Panc1 (cell line): ENCODE measurements at regions of chr1 and their contacts with region 1.

Region 1: DNA sequence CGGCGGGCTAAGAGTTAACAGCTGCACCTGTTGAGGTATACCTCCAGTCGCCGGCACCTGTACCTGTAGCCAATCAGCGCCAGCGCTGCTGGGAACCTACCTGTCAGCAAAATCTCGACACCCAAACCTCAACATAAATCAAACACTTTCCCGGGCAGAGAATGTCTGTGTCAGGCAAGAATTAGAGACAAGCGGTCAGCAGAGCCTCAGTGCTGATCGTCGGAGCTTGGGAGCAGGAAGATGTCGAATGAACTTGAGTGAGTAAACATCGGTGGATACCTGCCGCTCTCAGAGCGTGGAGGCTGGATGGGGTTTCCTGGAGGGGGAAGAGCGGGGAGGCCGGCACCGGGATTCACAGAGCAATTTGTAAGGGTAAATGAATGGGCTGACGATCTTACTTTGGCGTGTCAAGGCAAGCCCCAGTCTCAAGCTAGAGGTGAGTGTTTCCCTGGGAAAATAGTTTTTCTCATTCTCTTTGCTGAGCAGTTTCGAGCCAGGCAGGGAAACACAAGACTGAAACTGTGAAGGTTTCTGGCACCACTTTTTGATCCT is at the start of gene GRHL3:
- DNase-seq: no peak
- ATAC-seq: peak; percentile 16; the same call in 1 of the 2 replicates
- H3K4me3 ChIP-seq: peak within 1 kb of the TSS; percentile 46 to 71
- H3K27ac ChIP-seq: peak within 1 kb of the TSS; percentile 88
- H3K4me1 ChIP-seq: peaks cover 64% of the 10 kb centered on the region
- H3K27me3 ChIP-seq: no peaks in the 10 kb centered on the region
- CTCF ChIP-seq: no peak
- total RNA-seq, gene GRHL3: 16.7 TPM

Region 2: GRCh38 chr1:24289937-24290595 is 29.3 kb before region 1 on chr1:
- CTCF ChIA-PET with region 1: no interaction called
- POLR2A ChIA-PET with region 1: interaction called, 12 read pairs
- in situ Hi-C with region 1: no loop called
- intact Hi-C with region 1: no loop called
- DNase-seq: peak; percentile 78
- ATAC-seq: peak; percentile 89
- H3K4me3 ChIP-seq: no peak overlapping the region
- H3K27ac ChIP-seq: peak overlapping the region; percentile 46
- H3K4me1 ChIP-seq: peaks cover 26% of the 10 kb centered on the region
- H3K27me3 ChIP-seq: no peaks in the 10 kb centered on the region
- CTCF ChIP-seq: no peak

Region 3: DNA sequence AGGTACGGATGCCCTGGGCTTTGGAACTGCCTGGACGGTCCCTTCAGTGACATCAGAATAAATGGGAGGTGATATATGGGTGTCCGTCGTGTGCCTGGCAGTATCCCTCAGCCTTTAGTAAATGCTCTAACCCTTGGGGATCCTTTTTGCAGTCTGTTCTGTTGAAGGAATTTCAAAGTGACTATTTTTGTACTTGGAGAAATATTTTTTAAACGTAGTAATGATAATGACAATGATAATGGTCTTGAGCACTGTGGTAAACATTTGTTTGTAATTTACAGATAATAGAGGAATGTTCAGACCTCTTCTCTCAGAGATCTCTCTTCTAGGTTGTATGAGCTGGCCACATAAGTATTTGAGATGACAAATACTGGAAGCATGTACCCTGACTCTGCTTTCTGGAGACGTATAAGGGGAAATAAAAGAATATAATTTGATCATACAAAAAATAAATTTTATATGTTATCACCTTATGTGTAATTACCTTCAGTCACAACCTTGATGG is 281.7 kb after region 1 on chr1:
- CTCF ChIA-PET with region 1: no interaction called
- POLR2A ChIA-PET with region 1: no interaction called
- in situ Hi-C with region 1: no loop called
- intact Hi-C with region 1: no loop called
- DNase-seq: no peak
- ATAC-seq: peak; percentile 50; the same call in 1 of the 2 replicates
- H3K4me3 ChIP-seq: no peak overlapping the region
- H3K27ac ChIP-seq: no peak overlapping the region
- H3K4me1 ChIP-seq: 0 out of 2 replicates have a peak, but pooled peaks cover 5% of the 10 kb centered on the region
- H3K27me3 ChIP-seq: no peaks in the 10 kb centered on the region
- CTCF ChIP-seq: no peak